ENCODE measurements at regions of chr20 and their contacts with region 1.

Region 1: GRCh38 chr20:19074828-19075516 is 137.5 kb upstream of the SLC24A3 start:
- DNase-seq: peak; percentile 88
- ATAC-seq: peak; percentile 65
- H3K4me3 ChIP-seq: no peak overlapping the region
- H3K27ac ChIP-seq: peak overlapping the region; percentile 68
- H3K4me1 ChIP-seq: peaks cover 39% of the 10 kb centered on the region
- H3K27me3 ChIP-seq: no peaks in the 10 kb centered on the region
- CTCF ChIP-seq: no peak
- EP300 ChIP-seq: peak; percentile 59 to 68; a peak in 2 of 4 replicates
- POLR2A ChIP-seq: no peak
- RAD21 ChIP-seq: no peak

Region 2: DNA sequence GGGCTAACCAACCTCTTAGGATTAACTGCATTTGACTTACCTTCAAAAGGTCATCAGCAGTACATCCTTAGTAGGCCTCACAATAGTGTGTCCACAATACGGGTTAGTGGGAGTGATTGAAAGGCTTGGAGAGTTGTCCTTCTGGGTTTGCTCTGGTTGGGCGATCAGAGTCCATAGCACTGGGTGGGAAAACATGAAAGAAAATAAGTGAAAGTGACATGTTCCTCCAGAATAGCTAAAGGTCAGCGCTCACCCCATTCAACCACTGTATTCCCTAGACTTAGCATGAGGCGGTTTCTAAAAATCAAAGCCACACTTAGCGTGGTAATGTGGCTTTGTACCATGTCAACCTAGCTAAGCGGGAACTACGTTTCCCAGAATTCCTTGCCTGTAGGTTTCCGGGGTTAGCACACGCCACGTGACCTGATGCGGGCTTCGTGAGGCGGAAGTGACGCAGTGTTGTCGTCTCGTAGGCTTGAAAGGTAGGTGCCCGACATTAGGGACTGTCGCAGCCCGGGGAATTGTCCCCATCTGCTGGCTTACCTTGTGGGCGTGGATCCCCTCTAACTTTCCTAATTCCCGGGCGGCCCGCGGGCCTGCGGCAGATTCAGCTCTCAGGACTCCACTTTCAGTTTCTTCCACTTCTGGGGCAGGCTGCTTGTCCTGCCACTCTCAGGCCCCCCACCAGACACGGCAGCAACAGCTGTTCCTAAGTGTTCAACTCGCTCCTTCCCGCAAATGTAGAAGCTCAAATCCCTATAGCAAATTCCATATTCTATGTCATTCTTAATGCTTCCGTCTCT is 281.1 kb before region 1 on chr20:
- CTCF ChIA-PET with region 1: interaction called, 3 read pairs
- POLR2A ChIA-PET with region 1: no interaction called
- RAD21 ChIA-PET with region 1: no interaction called
- SMC1A ChIA-PET with region 1: interaction called, 3 read pairs
- in situ Hi-C with region 1: no loop called
- intact Hi-C with region 1: loop called (anchors 10 kb)
- DNase-seq: peak; percentile 84
- ATAC-seq: peak; percentile 96
- H3K4me3 ChIP-seq: peak overlapping the region; percentile 68
- H3K27ac ChIP-seq: peak overlapping the region; percentile 75
- H3K4me1 ChIP-seq: peaks cover 8% of the 10 kb centered on the region; the same call in 1 of the 2 replicates
- H3K27me3 ChIP-seq: no peaks in the 10 kb centered on the region
- CTCF ChIP-seq: peak; percentile 4 to 41 (median 17); a peak in 4 of 6 replicates
- EP300 ChIP-seq: no peak
- POLR2A ChIP-seq: peak; percentile 92
- RAD21 ChIP-seq: no peak

Region 3: GRCh38 chr20:19026121-19026878 is 48.7 kb before region 1 on chr20:
- CTCF ChIA-PET with region 1: interaction called, 6 read pairs
- POLR2A ChIA-PET with region 1: interaction called, 3 read pairs
- RAD21 ChIA-PET with region 1: interaction called, 11 read pairs
- SMC1A ChIA-PET with region 1: interaction called, 21 read pairs
- in situ Hi-C with region 1: no loop called
- intact Hi-C with region 1: no loop called
- DNase-seq: peak; percentile 33
- ATAC-seq: peak; percentile 86
- H3K4me3 ChIP-seq: no peak overlapping the region
- H3K27ac ChIP-seq: no peak overlapping the region
- H3K4me1 ChIP-seq: peaks cover 12% of the 10 kb centered on the region
- H3K27me3 ChIP-seq: no peaks in the 10 kb centered on the region
- CTCF ChIP-seq: no peak
- EP300 ChIP-seq: peak in 1 of 2 experiments; percentile 57; a peak in 1 of 4 replicates
- POLR2A ChIP-seq: no peak
- RAD21 ChIP-seq: peak; percentile 8; the same call in 1 of the 2 replicates

Region 4: DNA sequence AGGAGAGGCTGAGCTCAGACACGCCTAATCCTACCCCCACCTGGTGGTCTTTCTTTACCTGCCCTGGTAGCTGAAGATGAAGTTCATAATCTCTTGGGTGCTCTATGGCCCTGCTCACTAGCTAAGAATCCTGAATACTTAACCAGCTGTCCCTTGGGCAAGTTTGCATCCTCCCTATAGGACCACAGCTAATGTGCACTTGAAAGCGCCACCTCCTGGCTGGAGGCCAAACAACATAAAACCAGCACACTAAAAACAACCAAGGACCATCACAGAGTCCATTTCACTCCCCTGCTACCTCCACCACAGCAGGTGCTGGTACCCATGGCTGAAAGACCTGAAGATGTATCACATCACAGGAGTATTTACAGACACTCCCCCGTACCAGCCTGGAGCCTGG is 18.1 kb before region 1 on chr20:
- CTCF ChIA-PET with region 1: interaction called, 4 read pairs
- POLR2A ChIA-PET with region 1: no interaction called
- RAD21 ChIA-PET with region 1: interaction called, 3 read pairs
- SMC1A ChIA-PET with region 1: interaction called, 11 read pairs
- in situ Hi-C with region 1: no loop called
- intact Hi-C with region 1: no loop called
- DNase-seq: no peak
- ATAC-seq: no peak
- H3K4me3 ChIP-seq: no peak overlapping the region
- H3K27ac ChIP-seq: no peak overlapping the region
- H3K4me1 ChIP-seq: no peaks in the 10 kb centered on the region
- H3K27me3 ChIP-seq: no peaks in the 10 kb centered on the region
- CTCF ChIP-seq: peak in 2 of 3 experiments; percentile 13 to 31; a peak in 2 of 6 replicates
- EP300 ChIP-seq: no peak
- POLR2A ChIP-seq: no peak
- RAD21 ChIP-seq: 0 out of 2 replicates have a peak, but pooled peaks have one; percentile 25

Region 5: GRCh38 chr20:19114410-19114809 is 39.4 kb after region 1 on chr20:
- CTCF ChIA-PET with region 1: interaction called, 3 read pairs
- POLR2A ChIA-PET with region 1: interaction called, 4 read pairs
- RAD21 ChIA-PET with region 1: interaction called, 3 read pairs
- SMC1A ChIA-PET with region 1: interaction called, 10 read pairs
- in situ Hi-C with region 1: no loop called
- intact Hi-C with region 1: no loop called
- DNase-seq: peak; percentile 34
- ATAC-seq: peak; percentile 69
- H3K4me3 ChIP-seq: no peak overlapping the region
- H3K27ac ChIP-seq: no peak overlapping the region
- H3K4me1 ChIP-seq: no peaks in the 10 kb centered on the region
- H3K27me3 ChIP-seq: no peaks in the 10 kb centered on the region
- CTCF ChIP-seq: no peak
- EP300 ChIP-seq: no peak
- POLR2A ChIP-seq: no peak
- RAD21 ChIP-seq: no peak

Region 6: GRCh38 chr20:19185090-19185489 is 110.1 kb after region 1 on chr20:
- CTCF ChIA-PET with region 1: interaction called, 5 read pairs
- POLR2A ChIA-PET with region 1: interaction called, 3 read pairs
- RAD21 ChIA-PET with region 1: interaction called, 4 read pairs
- SMC1A ChIA-PET with region 1: interaction called, 3 read pairs
- in situ Hi-C with region 1: no loop called
- intact Hi-C with region 1: loop called (anchors 10 kb)
- DNase-seq: no peak
- ATAC-seq: no peak
- H3K4me3 ChIP-seq: no peak overlapping the region
- H3K27ac ChIP-seq: no peak overlapping the region
- H3K4me1 ChIP-seq: no peaks in the 10 kb centered on the region
- H3K27me3 ChIP-seq: no peaks in the 10 kb centered on the region
- CTCF ChIP-seq: 0 out of 6 replicates have a peak, but pooled peaks of 1 of the 3 experiments have one; percentile 5
- EP300 ChIP-seq: no peak
- POLR2A ChIP-seq: no peak
- RAD21 ChIP-seq: peak; percentile 46; the same call in 1 of the 2 replicates

Region 7: DNA sequence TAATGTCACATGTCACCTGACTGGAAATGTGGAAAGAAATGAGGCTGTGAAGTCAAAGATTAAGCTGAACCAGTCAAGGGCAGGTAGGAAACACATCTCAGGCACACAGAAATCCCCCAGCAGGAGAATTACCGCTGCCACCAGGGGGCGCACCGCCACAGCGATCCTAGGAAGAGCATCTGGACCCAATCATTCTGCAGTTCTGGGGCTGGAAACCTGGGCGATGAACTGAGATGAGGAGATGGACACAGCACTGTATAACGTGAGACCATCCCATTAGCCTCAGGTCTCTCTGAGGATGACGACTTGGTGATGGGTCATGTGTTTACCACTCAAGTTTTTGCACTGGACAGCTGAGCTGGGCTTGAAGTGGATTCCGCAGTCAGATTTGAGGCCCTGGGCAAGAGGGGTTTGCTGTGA is 131.0 kb after region 1 on chr20:
- CTCF ChIA-PET with region 1: interaction called, 10 read pairs
- POLR2A ChIA-PET with region 1: no interaction called
- RAD21 ChIA-PET with region 1: no interaction called
- SMC1A ChIA-PET with region 1: interaction called, 6 read pairs
- in situ Hi-C with region 1: no loop called
- intact Hi-C with region 1: no loop called
- DNase-seq: peak; percentile 8
- ATAC-seq: peak; percentile 90
- H3K4me3 ChIP-seq: no peak overlapping the region
- H3K27ac ChIP-seq: no peak overlapping the region
- H3K4me1 ChIP-seq: no peaks in the 10 kb centered on the region
- H3K27me3 ChIP-seq: no peaks in the 10 kb centered on the region; a peak in 3 of 4 replicates
- CTCF ChIP-seq: peak; percentile 82 to 85 (median 85)
- EP300 ChIP-seq: no peak
- POLR2A ChIP-seq: no peak
- RAD21 ChIP-seq: peak; percentile 80

Measured in GM12878 (cell line).